ENCODE measurements at regions of chr1 and their contacts with region 1.

Region 1: GRCh38 chr1:97565886-97566285 is 354.9 kb downstream of the DPYD start:
- DNase-seq: no peak
- ATAC-seq: no peak
- H3K4me3 Mint-ChIP-seq: no peak overlapping the region
- H3K27ac Mint-ChIP-seq: no peak overlapping the region
- H3K4me1 Mint-ChIP-seq: no peaks in the 10 kb centered on the region
- H3K27me3 Mint-ChIP-seq: no peaks in the 10 kb centered on the region
- CTCF ChIP-seq: no peak

Region 2: GRCh38 chr1:97377432-97378034 is 188.4 kb before region 1 on chr1:
- CTCF ChIA-PET with region 1: no interaction called
- POLR2A ChIA-PET with region 1: no interaction called
- intact Hi-C with region 1: no loop called
- DNase-seq: no peak
- ATAC-seq: no peak
- H3K4me3 Mint-ChIP-seq: no peak overlapping the region
- H3K27ac Mint-ChIP-seq: no peak overlapping the region
- H3K4me1 Mint-ChIP-seq: no peaks in the 10 kb centered on the region
- H3K27me3 Mint-ChIP-seq: no peaks in the 10 kb centered on the region
- CTCF ChIP-seq: no peak

Region 3: DNA sequence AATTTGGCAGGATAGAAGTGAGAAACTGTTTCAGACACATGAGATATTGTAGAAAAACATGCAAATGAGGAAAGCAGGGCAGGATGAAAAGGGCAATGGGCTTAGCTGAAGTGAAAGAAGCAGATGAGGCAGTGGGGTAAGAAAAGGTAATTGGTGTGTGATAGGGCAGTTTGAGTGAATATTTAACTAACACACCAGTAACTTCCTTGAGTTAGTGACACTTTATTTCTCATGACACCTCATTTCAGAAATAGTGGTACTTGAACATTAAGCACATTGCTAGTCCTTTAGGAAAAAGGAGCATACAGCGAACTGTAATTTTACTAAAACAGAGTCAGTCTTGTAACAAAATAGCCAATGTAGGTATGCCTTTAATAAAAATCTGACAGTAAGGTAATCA is 60.1 kb before region 1 on chr1:
- CTCF ChIA-PET with region 1: no interaction called
- POLR2A ChIA-PET with region 1: no interaction called
- intact Hi-C with region 1: loop called (anchors 2 kb)
- DNase-seq: no peak
- ATAC-seq: peak; percentile 60
- H3K4me3 Mint-ChIP-seq: no peak overlapping the region
- H3K27ac Mint-ChIP-seq: no peak overlapping the region
- H3K4me1 Mint-ChIP-seq: peaks cover 8% of the 10 kb centered on the region
- H3K27me3 Mint-ChIP-seq: no peaks in the 10 kb centered on the region
- CTCF ChIP-seq: no peak

Region 4: GRCh38 chr1:97529600-97529999 is 36.3 kb before region 1 on chr1:
- CTCF ChIA-PET with region 1: no interaction called
- POLR2A ChIA-PET with region 1: no interaction called
- intact Hi-C with region 1: no loop called
- DNase-seq: no peak
- ATAC-seq: no peak
- H3K4me3 Mint-ChIP-seq: no peak overlapping the region
- H3K27ac Mint-ChIP-seq: no peak overlapping the region
- H3K4me1 Mint-ChIP-seq: no peaks in the 10 kb centered on the region
- H3K27me3 Mint-ChIP-seq: no peaks in the 10 kb centered on the region
- CTCF ChIP-seq: no peak

Region 5: GRCh38 chr1:97654876-97655585 is 89.1 kb after region 1 on chr1:
- CTCF ChIA-PET with region 1: no interaction called
- POLR2A ChIA-PET with region 1: no interaction called
- intact Hi-C with region 1: no loop called
- DNase-seq: no peak
- ATAC-seq: no peak
- H3K4me3 Mint-ChIP-seq: no peak overlapping the region
- H3K27ac Mint-ChIP-seq: no peak overlapping the region
- H3K4me1 Mint-ChIP-seq: no peaks in the 10 kb centered on the region
- H3K27me3 Mint-ChIP-seq: no peaks in the 10 kb centered on the region
- CTCF ChIP-seq: no peak

Measured in activated B cell treated with CpG ODN at 0.5 μM for 24 hours (primary cell).